ENCODE measurements at regions of chr1 and their contacts with region 1.

Region 1: GRCh38 chr1:230978491-230979388 is at the starts of genes ARV1 and TTC13:
- DNase-seq: peak; percentile 98
- ATAC-seq: peak; percentile 98
- H3K4me3 ChIP-seq: peak within 1 kb of the TSS; percentile 87 to 94 (median 89)
- H3K27ac ChIP-seq: peak within 1 kb of the TSS; percentile 64
- H3K4me1 ChIP-seq: peaks cover 21% of the 10 kb centered on the region
- H3K27me3 ChIP-seq: no peaks in the 10 kb centered on the region; a peak in 1 of 5 replicates
- CTCF ChIP-seq: peak; percentile 85
- EP300 ChIP-seq: no peak
- POLR2A ChIP-seq: peak; percentile 65 to 75; a peak in 3 of 4 replicates
- RAD21 ChIP-seq: peak; percentile 86
- total RNA-seq, gene ARV1: 8.9 and 15.2 TPM in 2 replicates
- total RNA-seq, gene TTC13: 8.1 and 15.9 TPM in 2 replicates

Region 2: DNA sequence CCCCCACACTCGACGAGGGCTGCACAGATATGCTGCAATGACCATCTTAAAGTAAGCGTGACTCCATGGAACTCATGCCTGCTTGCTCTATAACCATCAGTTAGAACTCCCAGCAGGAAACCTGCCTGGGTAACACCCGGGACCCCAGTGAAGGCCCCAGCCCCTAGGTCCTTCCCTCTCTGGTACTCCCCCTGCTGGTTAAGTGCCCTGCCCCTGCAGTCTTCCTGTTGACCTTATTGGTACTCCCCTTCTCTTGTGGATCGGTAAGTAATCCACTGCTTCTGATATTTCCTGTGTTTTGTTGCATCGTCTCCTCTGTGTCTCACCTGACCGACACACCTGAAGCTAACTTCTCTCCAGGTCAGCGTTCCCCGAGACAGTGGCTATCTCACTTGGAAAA is 441.3 kb before region 1 on chr1:
- CTCF ChIA-PET with region 1: no interaction called
- POLR2A ChIA-PET with region 1: no interaction called
- in situ Hi-C with region 1: no loop called
- intact Hi-C with region 1: no loop called
- DNase-seq: no peak
- ATAC-seq: no peak
- H3K4me3 ChIP-seq: no peak overlapping the region
- H3K27ac ChIP-seq: no peak overlapping the region
- H3K4me1 ChIP-seq: no peaks in the 10 kb centered on the region
- H3K27me3 ChIP-seq: no peaks in the 10 kb centered on the region
- CTCF ChIP-seq: no peak
- EP300 ChIP-seq: no peak
- POLR2A ChIP-seq: no peak
- RAD21 ChIP-seq: no peak

Region 3: DNA sequence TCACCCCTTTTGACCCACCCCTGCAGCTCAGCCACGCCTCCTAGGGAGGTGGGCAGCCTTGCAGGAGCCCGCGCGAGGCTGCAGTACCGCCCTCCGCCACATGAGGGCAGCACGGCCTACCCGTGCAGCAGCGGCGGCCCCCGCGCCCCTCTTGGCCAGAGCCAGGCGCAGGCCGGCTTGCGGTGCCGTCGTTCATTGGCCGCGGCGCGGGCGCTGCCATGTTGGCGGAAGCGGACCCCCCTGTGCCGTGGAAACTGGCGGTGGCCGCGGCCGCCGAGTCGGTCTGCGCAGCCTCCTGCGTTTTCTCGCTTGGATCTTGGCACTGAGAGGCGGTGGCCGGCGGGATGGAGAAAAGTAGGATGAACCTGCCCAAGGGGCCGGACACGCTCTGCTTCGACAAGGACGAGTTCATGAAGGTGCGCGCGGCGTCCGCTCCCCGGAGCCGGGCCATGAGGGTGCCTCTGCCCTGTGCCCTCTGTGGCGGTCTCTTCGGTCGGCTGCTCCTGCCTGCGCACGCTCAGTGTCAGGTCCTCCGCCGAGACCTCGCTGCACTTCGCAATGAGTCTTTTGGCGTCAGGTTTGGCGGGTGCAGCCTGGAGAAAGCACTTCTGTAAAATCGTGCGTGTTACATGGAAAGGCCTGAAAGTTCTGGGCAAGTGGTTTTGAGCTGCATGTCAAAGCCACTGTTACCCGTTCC is 336.3 kb before region 1 on chr1 and contains the start of gene COG2:
- CTCF ChIA-PET with region 1: no interaction called
- POLR2A ChIA-PET with region 1: no interaction called
- in situ Hi-C with region 1: no loop called
- intact Hi-C with region 1: loop called (anchors 5 kb)
- DNase-seq: peak; percentile 77
- ATAC-seq: peak; percentile 95
- H3K4me3 ChIP-seq: peak within 1 kb of the TSS; percentile 85 to 96 (median 88)
- H3K27ac ChIP-seq: peak within 1 kb of the TSS; percentile 86
- H3K4me1 ChIP-seq: peaks cover 75% of the 10 kb centered on the region
- H3K27me3 ChIP-seq: no peaks in the 10 kb centered on the region; a peak in 1 of 5 replicates
- CTCF ChIP-seq: peak; percentile 96
- EP300 ChIP-seq: no peak; a peak in 1 of 4 replicates
- POLR2A ChIP-seq: peak; percentile 67 to 88
- RAD21 ChIP-seq: peak; percentile 93
- total RNA-seq, gene COG2: 36.3 and 51.3 TPM in 2 replicates

Region 4: DNA sequence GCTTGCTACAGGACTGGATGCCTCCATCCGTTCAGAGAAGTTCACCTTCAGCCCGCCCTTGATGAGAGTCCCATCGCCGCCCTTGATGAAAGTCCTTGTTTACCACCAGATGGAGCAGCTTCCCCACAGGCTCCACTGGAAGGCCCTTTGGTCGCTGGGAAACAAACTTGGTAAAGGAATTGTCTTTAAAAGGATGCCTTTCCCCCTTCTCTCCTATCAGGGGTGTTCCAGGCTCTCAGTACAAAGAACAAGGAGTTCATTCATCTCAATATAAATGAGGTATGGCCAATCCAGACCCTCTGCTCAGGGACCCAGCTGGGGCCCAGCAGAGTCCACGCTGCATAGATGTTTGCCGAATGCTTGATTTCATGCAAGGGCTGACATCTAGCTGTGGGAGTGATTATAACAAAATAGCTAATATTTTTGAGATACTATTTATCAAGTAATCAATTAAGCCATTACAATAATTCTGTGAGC is 180.8 kb before region 1 on chr1:
- CTCF ChIA-PET with region 1: interaction called, 9 read pairs
- POLR2A ChIA-PET with region 1: no interaction called
- in situ Hi-C with region 1: no loop called
- intact Hi-C with region 1: loop called (anchors 1 kb)
- DNase-seq: peak; percentile 62
- ATAC-seq: peak; percentile 92
- H3K4me3 ChIP-seq: no peak overlapping the region; a peak in 1 of 6 replicates
- H3K27ac ChIP-seq: no peak overlapping the region
- H3K4me1 ChIP-seq: peaks cover 22% of the 10 kb centered on the region
- H3K27me3 ChIP-seq: peaks cover 0 to 10% of the 10 kb centered on the region in 2 experiments; a peak in 1 of 5 replicates
- CTCF ChIP-seq: peak; percentile 88
- EP300 ChIP-seq: no peak
- POLR2A ChIP-seq: no peak
- RAD21 ChIP-seq: peak; percentile 75

Region 5: DNA sequence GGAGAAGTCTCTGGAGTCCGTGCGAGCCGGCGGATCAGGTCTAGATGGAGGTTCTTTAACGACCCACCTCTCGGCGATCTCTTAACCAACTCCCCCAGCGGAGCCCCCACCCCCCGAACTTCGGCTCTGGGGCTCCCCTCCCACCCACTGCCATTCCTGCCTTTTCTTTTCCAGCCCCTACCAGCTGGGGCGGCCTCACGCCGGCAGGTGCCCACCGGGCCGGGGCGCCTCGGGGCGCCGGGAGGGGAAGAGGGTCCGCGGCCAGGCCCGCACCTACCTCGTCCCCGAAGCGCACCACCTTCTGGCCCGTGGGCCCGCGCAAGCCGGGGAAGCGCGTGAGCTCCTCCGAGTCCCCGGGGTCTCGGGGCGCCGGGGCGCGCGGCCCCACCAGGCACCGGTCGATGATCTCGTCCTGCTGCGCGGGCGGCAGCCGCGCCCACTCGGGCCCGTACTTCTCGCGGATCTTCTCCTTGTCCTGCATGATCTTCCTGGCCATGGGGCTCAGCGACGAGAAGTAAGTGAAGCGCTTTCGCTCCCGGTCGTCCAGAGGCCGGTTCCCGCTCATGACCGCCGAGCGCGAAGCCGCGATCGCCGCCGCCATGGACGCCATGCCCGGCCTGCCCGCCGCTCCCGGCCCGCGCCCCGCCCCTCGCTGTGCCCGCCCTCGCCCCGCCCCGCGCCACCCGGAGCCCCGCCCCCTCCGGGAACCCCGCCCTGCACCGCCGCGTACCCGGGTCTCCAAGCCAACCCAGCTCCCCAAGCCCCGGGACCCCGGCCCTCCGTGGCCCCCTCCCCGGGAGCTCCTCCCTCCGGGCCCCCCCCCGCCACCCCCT is 110.6 kb before region 1 on chr1 and contains the start of gene C1orf198:
- CTCF ChIA-PET with region 1: no interaction called
- POLR2A ChIA-PET with region 1: interaction called, 5 read pairs
- in situ Hi-C with region 1: no loop called
- intact Hi-C with region 1: loop called (anchors 2 kb)
- DNase-seq: peak; percentile 32
- ATAC-seq: peak; percentile 89
- H3K4me3 ChIP-seq: peak within 1 kb of the TSS; percentile 87 to 93 (median 92)
- H3K27ac ChIP-seq: peak within 1 kb of the TSS; percentile 86
- H3K4me1 ChIP-seq: peaks cover 58% of the 10 kb centered on the region
- H3K27me3 ChIP-seq: no peaks in the 10 kb centered on the region
- CTCF ChIP-seq: no peak
- EP300 ChIP-seq: no peak
- POLR2A ChIP-seq: peak; percentile 68 to 85
- RAD21 ChIP-seq: peak; percentile 38; the same call in 1 of the 2 replicates
- total RNA-seq, gene C1orf198: 13.4 and 16.0 TPM in 2 replicates

Region 6: GRCh38 chr1:230917284-230918135 is 61.2 kb before region 1 on chr1:
- CTCF ChIA-PET with region 1: interaction called, 11 read pairs
- POLR2A ChIA-PET with region 1: interaction called, 4 read pairs
- in situ Hi-C with region 1: no loop called
- intact Hi-C with region 1: loop called (anchors 1 kb)
- DNase-seq: peak; percentile 80
- ATAC-seq: peak; percentile 90
- H3K4me3 ChIP-seq: no peak overlapping the region
- H3K27ac ChIP-seq: no peak overlapping the region
- H3K4me1 ChIP-seq: peaks cover 13% of the 10 kb centered on the region
- H3K27me3 ChIP-seq: no peaks in the 10 kb centered on the region
- CTCF ChIP-seq: peak; percentile 81
- EP300 ChIP-seq: no peak
- POLR2A ChIP-seq: no peak
- RAD21 ChIP-seq: peak; percentile 50; the same call in 1 of the 2 replicates

Region 7: DNA sequence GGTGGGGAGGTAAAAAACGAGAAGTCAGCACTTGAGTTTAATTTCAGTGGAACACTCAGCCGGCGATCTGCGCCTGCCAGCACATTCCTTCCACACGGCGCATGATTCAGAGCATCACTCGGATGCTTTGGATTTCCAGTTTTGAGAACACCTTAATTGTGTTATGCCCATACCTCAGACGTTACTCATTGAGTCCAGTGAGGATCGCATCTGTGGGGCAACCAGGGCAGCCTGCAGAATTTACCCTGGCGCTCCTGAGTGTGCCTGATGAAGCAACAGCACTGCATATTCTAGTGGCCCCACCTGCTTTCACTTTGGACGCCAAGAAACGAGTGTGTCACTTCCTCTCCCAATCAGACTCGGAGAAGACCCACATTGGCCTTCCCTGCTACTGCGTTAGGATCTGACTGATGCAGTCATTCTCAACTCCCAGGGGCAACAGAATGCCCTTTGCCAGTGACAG is 41.4 kb after region 1 on chr1:
- CTCF ChIA-PET with region 1: no interaction called
- POLR2A ChIA-PET with region 1: no interaction called
- in situ Hi-C with region 1: no loop called
- intact Hi-C with region 1: no loop called
- DNase-seq: no peak
- ATAC-seq: no peak
- H3K4me3 ChIP-seq: no peak overlapping the region
- H3K27ac ChIP-seq: no peak overlapping the region
- H3K4me1 ChIP-seq: 0 out of 2 replicates have a peak, but pooled peaks cover 2% of the 10 kb centered on the region
- H3K27me3 ChIP-seq: peaks cover 0 to 5% of the 10 kb centered on the region in 2 experiments; a peak in 1 of 5 replicates
- CTCF ChIP-seq: no peak
- EP300 ChIP-seq: no peak
- POLR2A ChIP-seq: no peak
- RAD21 ChIP-seq: no peak

Region 8: DNA sequence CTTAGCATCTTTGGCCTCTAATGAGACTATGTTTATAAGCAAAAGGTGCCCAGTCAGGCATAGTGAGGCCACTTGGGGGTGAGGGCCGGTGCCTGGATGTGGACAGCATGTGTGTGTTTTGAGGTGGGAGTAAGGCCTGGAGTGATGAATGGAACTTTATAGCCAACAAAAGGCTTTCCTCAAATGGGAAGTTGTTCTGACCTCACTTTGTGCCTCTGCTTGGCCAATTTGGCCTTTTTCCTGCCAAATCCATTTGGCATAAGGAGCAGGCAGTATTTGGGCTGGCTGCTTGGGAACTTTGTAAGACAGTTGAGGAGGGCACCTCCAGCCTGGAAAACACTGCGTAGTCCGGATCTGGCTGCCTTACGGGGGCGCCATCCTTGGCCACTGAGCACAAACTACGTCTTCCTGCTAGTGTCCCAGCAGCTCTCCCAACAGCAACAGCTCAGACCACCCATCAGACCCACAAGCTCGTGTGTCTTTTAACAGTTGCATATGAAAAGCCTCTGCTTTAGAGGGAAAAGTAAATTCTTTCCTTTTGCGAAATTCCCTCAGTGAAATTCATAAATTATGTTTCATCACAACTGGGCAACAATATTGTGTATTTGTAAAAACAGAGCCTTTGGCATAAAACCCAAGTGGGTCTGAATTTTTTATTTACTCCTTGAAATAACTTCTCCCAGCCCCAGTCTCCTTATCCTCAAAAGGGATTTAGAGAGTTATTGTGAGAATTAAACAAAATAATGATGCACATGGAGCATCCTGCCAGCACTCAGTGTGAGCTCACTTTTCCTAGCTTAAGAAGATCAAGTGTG is 970.7 kb after region 1 on chr1:
- CTCF ChIA-PET with region 1: no interaction called
- POLR2A ChIA-PET with region 1: no interaction called
- in situ Hi-C with region 1: no loop called
- intact Hi-C with region 1: no loop called
- DNase-seq: no peak
- ATAC-seq: no peak
- H3K4me3 ChIP-seq: no peak overlapping the region
- H3K27ac ChIP-seq: no peak overlapping the region
- H3K4me1 ChIP-seq: no peaks in the 10 kb centered on the region
- H3K27me3 ChIP-seq: no peaks in the 10 kb centered on the region
- CTCF ChIP-seq: no peak
- EP300 ChIP-seq: no peak
- POLR2A ChIP-seq: no peak
- RAD21 ChIP-seq: no peak

Measured in HepG2 (cell line).